ENCODE measurements at regions of chr5 and their contacts with region 1.

Region 1: GRCh38 chr5:36414869-36415282 is 113.2 kb upstream of the RANBP3L start:
- DNase-seq: no peak
- ATAC-seq: no peak
- H3K4me3 ChIP-seq: no peak overlapping the region
- H3K27ac ChIP-seq: no peak overlapping the region
- H3K4me1 ChIP-seq: no peaks in the 10 kb centered on the region
- H3K27me3 ChIP-seq: no peaks in the 10 kb centered on the region
- CTCF ChIP-seq: peak; percentile 47

Region 2: DNA sequence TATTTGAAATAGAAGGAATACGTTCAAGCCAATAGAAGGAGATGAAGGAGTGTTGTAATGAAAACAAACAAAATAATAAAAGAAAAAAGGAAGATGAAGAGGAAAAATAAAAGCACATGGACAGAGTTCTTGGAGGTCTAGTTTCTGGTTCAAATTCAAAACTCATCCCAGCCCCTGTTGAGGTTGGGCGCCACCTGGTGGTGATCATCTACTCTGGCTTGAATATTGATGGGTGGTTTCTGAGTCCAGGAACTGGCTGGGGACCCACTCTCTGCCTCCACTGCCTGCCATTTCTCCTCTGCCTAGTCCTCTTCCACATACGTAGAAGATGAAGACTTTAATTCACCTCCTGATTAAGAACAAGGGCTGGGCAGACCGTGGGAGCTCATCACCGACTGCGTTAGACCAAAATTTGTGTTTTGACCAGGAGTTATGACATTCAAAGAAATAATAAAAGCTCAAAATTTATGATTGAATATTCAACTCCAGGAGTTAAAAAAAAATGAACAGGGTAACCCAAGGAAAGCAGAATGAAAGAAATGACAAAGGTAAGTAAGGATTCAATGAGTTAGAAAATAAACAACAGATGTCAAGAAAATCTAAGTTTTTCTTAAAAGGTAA is 92.6 kb after region 1 on chr5:
- intact Hi-C with region 1: loop called (anchors 10 kb)
- DNase-seq: peak; percentile 80
- ATAC-seq: peak; percentile 58 to 83
- H3K4me3 ChIP-seq: no peak overlapping the region
- H3K27ac ChIP-seq: no peak overlapping the region
- H3K4me1 ChIP-seq: no peaks in the 10 kb centered on the region
- H3K27me3 ChIP-seq: no peaks in the 10 kb centered on the region
- CTCF ChIP-seq: peak; percentile 84

Region 3: DNA sequence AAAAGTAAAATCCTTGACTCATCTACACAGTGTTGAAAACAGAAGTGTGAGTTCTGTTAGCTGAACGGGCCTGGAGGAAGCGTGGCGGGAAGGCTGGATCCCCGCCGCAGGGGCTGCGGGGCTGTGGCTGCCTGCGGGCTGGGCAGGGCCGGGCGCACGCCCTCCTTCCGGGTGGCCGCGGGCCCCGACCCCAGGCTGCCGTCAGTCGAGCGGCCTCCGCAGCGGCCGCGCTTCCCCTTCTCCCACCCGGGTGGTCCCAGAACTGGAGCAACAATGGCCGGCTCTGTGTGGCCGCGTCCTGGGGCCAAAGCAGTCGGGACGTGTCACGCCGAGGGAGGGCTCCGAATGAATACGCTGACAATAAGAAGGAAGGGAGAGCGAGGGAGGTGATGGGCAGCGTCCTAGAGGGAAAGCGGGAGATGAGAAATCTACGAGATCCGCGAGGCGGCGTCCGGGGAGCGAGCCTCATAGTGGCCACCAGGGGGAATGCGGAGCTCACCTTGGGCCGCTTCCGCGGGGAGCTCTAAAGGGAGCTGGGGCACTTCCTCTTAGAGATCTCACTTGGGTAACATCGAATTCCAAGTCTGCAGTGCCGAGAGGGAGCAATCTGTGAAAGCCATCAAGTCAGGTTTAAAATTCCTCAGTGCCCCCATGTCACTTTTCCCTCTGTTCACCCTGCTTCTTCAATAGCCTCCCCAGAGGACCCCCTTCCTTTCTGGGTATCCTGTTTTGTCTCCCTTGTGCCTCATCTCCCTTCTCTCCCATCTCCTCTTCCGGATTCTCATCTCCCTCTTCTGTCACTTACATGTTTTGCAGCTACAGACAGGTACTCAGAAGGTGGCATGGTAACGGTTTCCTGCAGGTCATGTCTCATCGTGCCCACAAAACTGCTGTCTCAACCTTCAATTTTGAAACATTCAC is 275.4 kb after region 1 on chr5:
- intact Hi-C with region 1: loop called (anchors 10 kb)
- DNase-seq: peak; percentile 90
- ATAC-seq: peak; percentile 86 to 88
- H3K4me3 ChIP-seq: peak overlapping the region; percentile 61
- H3K27ac ChIP-seq: peak overlapping the region; percentile 76
- H3K4me1 ChIP-seq: peaks cover 36% of the 10 kb centered on the region
- H3K27me3 ChIP-seq: peaks cover 16% of the 10 kb centered on the region
- CTCF ChIP-seq: peak; percentile 83